SK-N-SH (cell line): ENCODE measurements at regions of chr18 and their contacts with region 1.

Region 1: GRCh38 chr18:6543330-6543908 is 128.7 kb upstream of the L3MBTL4 start:
- DNase-seq: peak; percentile 37
- H3K4me3 ChIP-seq: no peak overlapping the region; a peak in 1 of 4 replicates
- H3K27ac ChIP-seq: no peak overlapping the region
- H3K4me1 ChIP-seq: peaks cover 0 to 2% of the 10 kb centered on the region in 2 experiments; a peak in 1 of 4 replicates
- H3K27me3 ChIP-seq: no peaks in the 10 kb centered on the region
- CTCF ChIP-seq: peak; percentile 76
- EP300 ChIP-seq: no peak
- RAD21 ChIP-seq: peak; percentile 88

Region 2: DNA sequence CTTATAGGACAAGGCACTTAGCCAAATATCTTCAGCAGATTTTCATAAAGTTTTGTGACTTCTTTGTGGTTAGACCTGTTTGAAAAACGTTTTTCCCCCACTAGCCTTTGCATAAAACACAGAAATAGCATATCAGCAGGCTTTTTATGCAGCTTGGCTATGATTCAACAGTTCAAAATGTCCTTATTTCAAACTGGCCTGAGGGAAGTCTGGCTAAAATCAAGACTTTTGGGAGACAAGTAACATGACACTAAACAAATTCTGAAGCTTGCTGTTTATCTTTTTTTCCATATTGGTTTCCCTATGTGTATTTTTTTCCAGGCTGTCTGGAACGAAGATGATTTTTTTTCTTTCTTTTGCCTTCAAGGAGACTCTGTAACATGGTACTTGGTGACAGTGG is 33.6 kb before region 1 on chr18:
- CTCF ChIA-PET with region 1: no interaction called
- POLR2A ChIA-PET with region 1: no interaction called
- DNase-seq: peak; percentile 44
- H3K4me3 ChIP-seq: no peak overlapping the region; a peak in 1 of 4 replicates
- H3K27ac ChIP-seq: peak overlapping the region in 1 of 2 experiments; percentile 96; a peak in 2 of 4 replicates
- H3K4me1 ChIP-seq: peaks cover 0 to 22% of the 10 kb centered on the region in 2 experiments; a peak in 2 of 4 replicates
- H3K27me3 ChIP-seq: no peaks in the 10 kb centered on the region
- CTCF ChIP-seq: no peak
- EP300 ChIP-seq: peak in 1 of 2 experiments; percentile 87; a peak in 2 of 4 replicates
- RAD21 ChIP-seq: no peak

Region 3: GRCh38 chr18:6525604-6526003 is 17.8 kb before region 1 on chr18:
- CTCF ChIA-PET with region 1: interaction called, 22 read pairs
- POLR2A ChIA-PET with region 1: no interaction called
- DNase-seq: no peak
- H3K4me3 ChIP-seq: no peak overlapping the region
- H3K27ac ChIP-seq: no peak overlapping the region
- H3K4me1 ChIP-seq: no peaks in the 10 kb centered on the region
- H3K27me3 ChIP-seq: no peaks in the 10 kb centered on the region
- CTCF ChIP-seq: no peak
- EP300 ChIP-seq: no peak
- RAD21 ChIP-seq: no peak

Region 4: DNA sequence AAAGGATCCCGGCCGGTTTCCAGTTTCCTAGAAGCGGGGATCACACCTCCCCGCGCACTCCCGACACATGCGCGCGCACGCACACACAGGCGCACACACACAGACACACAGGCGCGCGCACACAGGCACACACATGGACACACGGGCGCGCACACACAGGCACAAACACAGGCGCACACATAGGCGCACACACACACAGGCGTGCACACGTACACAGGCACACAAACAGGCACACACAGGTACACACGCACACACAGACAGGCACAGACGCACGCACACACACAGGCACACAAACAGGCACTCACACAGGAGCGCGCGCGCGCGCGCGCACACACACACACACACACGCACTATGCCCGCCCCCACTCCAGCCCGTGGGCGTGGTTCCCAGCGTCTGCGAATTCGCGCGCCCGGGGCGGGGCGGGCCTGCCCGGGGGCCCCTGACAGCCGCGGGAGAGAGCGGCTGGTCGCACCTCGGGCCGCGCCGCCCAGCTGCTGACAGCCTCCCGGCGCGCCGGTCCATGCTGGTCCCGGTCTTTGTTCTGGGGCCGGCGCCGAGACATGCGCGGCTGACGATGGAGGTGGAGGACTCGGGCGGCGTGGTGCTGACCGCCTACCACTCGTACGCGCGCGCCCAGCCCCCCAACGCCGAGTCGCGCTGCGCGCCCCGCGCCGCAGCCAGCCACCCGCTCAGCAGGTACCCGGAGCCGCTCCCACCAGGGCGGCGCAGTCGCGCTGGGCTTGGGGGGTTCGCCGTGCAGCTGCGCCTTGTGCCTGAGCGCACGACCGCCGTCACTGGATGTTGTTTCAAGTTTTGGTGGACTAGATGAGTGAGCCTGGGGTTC is 186.1 kb after region 1 on chr18 and contains the start of gene ARHGAP28:
- CTCF ChIA-PET with region 1: interaction called, 10 read pairs
- POLR2A ChIA-PET with region 1: no interaction called
- DNase-seq: peak; percentile 89
- H3K4me3 ChIP-seq: peak within 1 kb of the TSS; percentile 49 to 70
- H3K27ac ChIP-seq: peak within 1 kb of the TSS; percentile 10 to 85; a peak in 3 of 4 replicates
- H3K4me1 ChIP-seq: peaks cover 5 to 15% of the 10 kb centered on the region in 2 experiments; a peak in 3 of 4 replicates
- H3K27me3 ChIP-seq: peaks cover 5% of the 10 kb centered on the region; the same call in 1 of the 2 replicates
- CTCF ChIP-seq: peak; percentile 36
- EP300 ChIP-seq: no peak
- RAD21 ChIP-seq: peak; percentile 28
- polyA plus RNA-seq, gene ARHGAP28: 0.99 and 1.3 TPM in 2 replicates

Region 5: DNA sequence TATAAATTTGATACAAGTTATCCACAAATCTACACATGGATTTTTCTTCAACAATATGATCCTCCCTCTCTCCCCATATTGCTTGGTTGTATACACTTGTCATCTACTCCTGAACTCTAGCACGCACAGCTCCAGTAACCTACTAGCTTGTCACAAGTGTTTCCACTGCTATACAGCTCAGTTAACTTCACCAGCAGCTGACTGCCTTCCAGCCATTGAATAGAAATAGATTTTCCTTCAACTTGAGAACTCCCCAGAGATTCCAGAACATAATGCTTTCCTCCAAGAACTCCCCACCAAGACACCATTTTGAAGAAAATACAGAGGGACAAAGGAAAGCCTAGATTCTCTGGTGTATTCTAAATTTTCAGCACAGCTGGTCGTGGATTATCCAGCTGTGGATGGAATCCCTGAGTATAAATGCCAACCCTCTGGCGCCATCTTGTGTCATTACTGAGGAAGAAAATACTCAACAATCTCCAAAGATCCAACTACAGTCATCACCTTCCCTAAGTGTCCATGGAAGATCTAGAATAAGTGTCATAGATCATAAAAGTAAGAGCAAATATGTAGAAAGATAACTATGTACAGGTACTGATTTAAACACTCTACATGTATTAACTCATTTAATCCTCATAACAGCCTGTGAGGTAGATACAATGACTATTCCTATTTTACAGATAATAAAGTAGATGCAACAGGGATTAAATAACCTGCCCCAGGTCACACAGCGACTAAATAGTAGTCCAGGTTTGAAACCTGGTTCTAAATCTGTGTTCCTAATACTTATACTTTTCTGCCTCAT is 342.8 kb after region 1 on chr18:
- CTCF ChIA-PET with region 1: interaction called, 100 read pairs
- POLR2A ChIA-PET with region 1: no interaction called
- DNase-seq: peak; percentile 65
- H3K4me3 ChIP-seq: no peak overlapping the region
- H3K27ac ChIP-seq: no peak overlapping the region
- H3K4me1 ChIP-seq: no peaks in the 10 kb centered on the region
- H3K27me3 ChIP-seq: no peaks in the 10 kb centered on the region
- CTCF ChIP-seq: peak; percentile 84
- EP300 ChIP-seq: no peak
- RAD21 ChIP-seq: peak; percentile 98